Vagina (tissue), 2 donors: ENCODE measurements at regions of chr2 and their contacts with region 1.

Region 1: GRCh38 chr2:203535078-203535783 is at the start of gene RAPH1:
- DNase-seq: peak in 1 of 2 donors; percentile 90
- H3K4me3 ChIP-seq: peak within 1 kb of the TSS; percentile 71 to 73
- H3K27ac ChIP-seq: peak within 1 kb of the TSS; percentile 90
- H3K4me1 ChIP-seq: peaks cover 38% of the 10 kb centered on the region
- H3K27me3 ChIP-seq: no peaks in the 10 kb centered on the region
- CTCF ChIP-seq: no peak
- POLR2A ChIP-seq: peak in 1 of 2 donors; percentile 36
- total RNA-seq, gene RAPH1: 22.6 TPM

Region 2: DNA sequence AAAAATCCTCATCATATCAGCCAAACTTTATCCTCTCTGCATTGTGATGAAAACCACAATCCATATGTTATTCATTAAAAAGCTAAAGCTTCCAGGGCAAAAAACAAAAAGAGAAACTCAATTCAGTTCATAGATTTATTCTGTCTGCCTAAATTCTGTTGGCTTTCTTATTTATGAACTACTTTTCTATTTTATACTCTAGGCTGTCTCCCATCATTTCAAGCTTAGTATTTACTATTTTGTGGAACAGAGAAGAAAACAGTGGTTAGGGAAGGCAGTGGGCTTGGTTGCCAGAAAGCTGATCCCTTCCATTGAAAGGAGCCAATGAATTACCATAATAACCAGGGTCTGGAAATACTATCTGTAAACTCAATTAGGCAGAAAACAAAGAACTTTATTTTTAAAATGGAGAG is 72.0 kb before region 1 on chr2:
- intact Hi-C with region 1: no loop called
- DNase-seq: no peak
- H3K4me3 ChIP-seq: no peak overlapping the region
- H3K27ac ChIP-seq: no peak overlapping the region
- H3K4me1 ChIP-seq: no peaks in the 10 kb centered on the region
- H3K27me3 ChIP-seq: no peaks in the 10 kb centered on the region
- CTCF ChIP-seq: no peak
- POLR2A ChIP-seq: no peak

Region 3: DNA sequence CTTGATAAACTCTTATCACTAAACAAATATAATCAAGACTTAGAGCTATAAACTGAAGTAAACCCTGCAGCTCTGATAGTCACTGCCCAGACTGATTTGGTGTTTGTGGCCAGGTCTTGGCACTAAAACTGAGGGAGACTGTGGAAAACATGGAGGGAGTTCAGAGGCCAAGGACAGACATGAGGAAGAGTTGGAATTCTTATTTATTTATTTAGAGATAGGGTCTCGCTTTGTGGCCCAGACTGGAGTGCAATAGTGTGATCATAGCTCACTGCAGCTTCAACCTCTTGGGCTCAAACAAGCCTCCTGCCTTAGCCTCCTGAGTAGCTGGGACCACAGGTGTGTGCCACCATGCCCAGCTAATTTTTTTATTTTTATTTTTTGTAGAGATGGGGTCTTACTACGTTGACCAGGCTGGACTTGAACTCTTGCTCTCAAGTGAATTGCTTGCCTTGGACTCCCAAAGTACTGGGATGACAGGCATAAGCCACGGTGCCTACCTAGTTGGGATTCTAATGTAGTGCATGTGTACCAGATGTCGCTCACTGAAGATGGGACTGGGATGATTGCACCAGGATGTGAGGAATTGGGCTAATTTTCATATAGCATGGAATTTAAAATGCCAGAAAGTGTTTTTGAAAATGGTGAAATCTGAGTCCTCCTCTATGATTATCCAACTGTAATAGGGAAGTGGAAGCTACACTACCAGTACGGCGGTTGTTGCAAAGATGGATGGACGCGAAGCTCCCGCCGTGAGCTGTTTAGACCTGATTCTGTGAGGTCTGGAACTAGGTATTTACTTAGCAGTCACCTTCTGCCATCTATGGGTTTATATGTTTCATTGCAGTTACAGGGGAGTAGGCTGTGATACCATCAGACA is 279.7 kb after region 1 on chr2:
- intact Hi-C with region 1: loop called (anchors 10 kb)
- DNase-seq: no peak
- H3K4me3 ChIP-seq: no peak overlapping the region
- H3K27ac ChIP-seq: no peak overlapping the region
- H3K4me1 ChIP-seq: peaks cover 16% of the 10 kb centered on the region
- H3K27me3 ChIP-seq: no peaks in the 10 kb centered on the region
- CTCF ChIP-seq: peak; percentile 51 to 88 (median 67)
- POLR2A ChIP-seq: no peak